ENCODE measurements at regions of chr1 and their contacts with region 1.

Region 1: DNA sequence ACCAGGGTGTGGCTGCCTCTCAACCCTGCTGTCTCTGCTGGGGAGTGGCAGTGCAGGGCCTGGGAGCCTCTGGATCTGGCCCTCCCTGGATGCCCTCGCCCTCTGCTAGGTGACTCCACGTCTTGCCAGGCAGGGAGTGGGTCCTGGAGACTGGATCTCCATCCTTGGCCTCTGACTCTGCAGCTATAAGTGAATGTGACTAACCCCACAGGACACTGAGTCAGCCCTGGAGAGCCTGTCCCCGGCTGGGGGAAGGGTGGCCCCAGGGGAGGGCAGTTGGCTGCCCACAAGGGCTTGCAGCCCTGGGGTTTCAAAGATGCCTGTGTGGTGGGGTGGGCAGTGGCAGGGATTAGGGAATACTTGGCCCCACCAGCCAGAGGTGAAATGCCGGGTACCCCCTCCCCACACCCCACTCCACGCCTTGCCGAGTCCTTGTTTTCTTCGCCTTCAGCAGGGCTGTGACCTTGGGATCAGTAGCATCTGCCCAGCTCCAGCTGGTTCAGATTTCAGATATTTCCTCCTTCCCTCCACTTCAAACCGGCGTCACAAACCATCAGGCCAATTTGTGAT is 1.9 kb upstream of the MYBPH start:
- DNase-seq: peak; percentile 69 to 85
- ATAC-seq: peak; percentile 67 to 76 (median 74)
- H3K4me3 ChIP-seq: no peak overlapping the region
- H3K27ac ChIP-seq: peak overlapping the region; percentile 89
- H3K4me1 ChIP-seq: peaks cover 56% of the 10 kb centered on the region
- H3K27me3 ChIP-seq: no peaks in the 10 kb centered on the region
- CTCF ChIP-seq: no peak

Region 2: DNA sequence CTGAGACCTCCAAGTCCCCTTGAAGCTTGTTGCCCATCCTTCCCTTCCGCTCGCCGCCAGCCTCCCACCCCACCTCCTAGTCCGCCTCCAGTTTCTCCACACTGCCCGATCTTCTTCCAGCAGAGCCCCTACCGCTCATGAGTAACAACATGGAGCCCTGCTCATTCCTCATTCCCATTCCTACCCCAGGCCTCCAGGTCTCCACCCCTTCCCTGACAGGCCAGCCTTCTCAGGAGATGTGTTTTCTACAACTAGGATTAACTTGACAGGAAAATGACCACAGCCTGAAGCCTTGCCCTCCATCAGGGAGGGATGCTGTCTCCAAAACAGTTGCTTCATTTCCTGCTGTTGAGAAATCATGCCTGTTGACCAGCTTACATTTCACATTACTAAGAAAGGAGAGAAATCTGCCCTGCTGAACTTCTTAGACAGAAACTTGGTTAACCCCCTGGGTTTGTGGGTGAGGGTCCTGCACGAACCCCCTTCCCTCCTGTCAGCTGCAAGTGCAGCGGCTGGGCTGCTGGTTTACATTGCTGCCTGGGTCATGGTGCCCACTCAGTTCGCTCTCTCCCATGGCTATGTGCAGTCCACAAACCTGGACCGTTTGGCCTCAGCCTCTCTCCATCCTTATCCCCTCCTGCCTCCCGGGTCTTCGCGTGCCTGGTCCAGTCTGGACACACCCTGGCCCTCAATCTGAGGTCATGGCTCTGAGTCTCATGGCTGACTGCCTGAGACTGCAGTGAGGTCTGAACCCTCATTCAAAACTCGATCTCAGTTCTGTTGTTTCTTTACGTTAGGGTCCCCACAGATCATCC is 25.1 kb after region 1 on chr1:
- intact Hi-C with region 1: loop called in 1 of 2 experiments (anchors 2 kb)
- DNase-seq: peak; percentile 69 to 71
- ATAC-seq: peak; percentile 62 to 73 (median 68)
- H3K4me3 ChIP-seq: no peak overlapping the region
- H3K27ac ChIP-seq: peak overlapping the region; percentile 83
- H3K4me1 ChIP-seq: peaks cover 45% of the 10 kb centered on the region
- H3K27me3 ChIP-seq: no peaks in the 10 kb centered on the region
- CTCF ChIP-seq: no peak

Region 3: GRCh38 chr1:203267347-203267846 is 89.8 kb after region 1 on chr1:
- intact Hi-C with region 1: loop called in 1 of 2 experiments (anchors 5 kb)
- DNase-seq: peak; percentile 85 to 91
- ATAC-seq: peak; percentile 75 to 85 (median 80)
- H3K4me3 ChIP-seq: peak overlapping the region; percentile 73
- H3K27ac ChIP-seq: peak overlapping the region; percentile 93
- H3K4me1 ChIP-seq: peaks cover 30% of the 10 kb centered on the region
- H3K27me3 ChIP-seq: no peaks in the 10 kb centered on the region
- CTCF ChIP-seq: peak; percentile 92

Measured in psoas muscle (tissue), 8 donors.